ENCODE measurements at regions of chr13 and their contacts with region 1.

Region 1: GRCh38 chr13:90867336-90867683 is 480.2 kb upstream of the MIR17HG start:
- DNase-seq: peak; percentile 84 to 85
- H3K4me3 ChIP-seq: no peak overlapping the region
- H3K4me3 Mint-ChIP-seq: no peak overlapping the region
- H3K27ac Mint-ChIP-seq: peak overlapping the region; percentile 72
- H3K4me1 ChIP-seq: peaks cover 10% of the 10 kb centered on the region
- H3K4me1 Mint-ChIP-seq: peaks cover 13% of the 10 kb centered on the region
- H3K27me3 ChIP-seq: no peaks in the 10 kb centered on the region
- H3K27me3 Mint-ChIP-seq: no peaks in the 10 kb centered on the region
- CTCF ChIP-seq: peak; percentile 68 to 74

Region 2: GRCh38 chr13:89930861-89931260 is 936.4 kb before region 1 on chr13:
- CTCF ChIA-PET with region 1: no interaction called
- POLR2A ChIA-PET with region 1: no interaction called
- intact Hi-C with region 1: loop called (anchors 1 kb)
- DNase-seq: peak; percentile 25 to 43
- H3K4me3 ChIP-seq: no peak overlapping the region
- H3K4me3 Mint-ChIP-seq: peak overlapping the region; percentile 42
- H3K27ac Mint-ChIP-seq: no peak overlapping the region
- H3K4me1 ChIP-seq: peaks cover 11% of the 10 kb centered on the region; the same call in 1 of the 2 replicates
- H3K4me1 Mint-ChIP-seq: peaks cover 9% of the 10 kb centered on the region
- H3K27me3 ChIP-seq: no peaks in the 10 kb centered on the region
- H3K27me3 Mint-ChIP-seq: no peaks in the 10 kb centered on the region
- CTCF ChIP-seq: no peak

Region 3: GRCh38 chr13:90374168-90374567 is 493.1 kb before region 1 on chr13:
- CTCF ChIA-PET with region 1: no interaction called
- POLR2A ChIA-PET with region 1: no interaction called
- intact Hi-C with region 1: loop called (anchors 5 kb)
- DNase-seq: no peak
- H3K4me3 ChIP-seq: no peak overlapping the region
- H3K4me3 Mint-ChIP-seq: no peak overlapping the region
- H3K27ac Mint-ChIP-seq: no peak overlapping the region
- H3K4me1 ChIP-seq: no peaks in the 10 kb centered on the region
- H3K4me1 Mint-ChIP-seq: no peaks in the 10 kb centered on the region
- H3K27me3 ChIP-seq: no peaks in the 10 kb centered on the region; the same call in 1 of the 2 replicates
- H3K27me3 Mint-ChIP-seq: no peaks in the 10 kb centered on the region
- CTCF ChIP-seq: no peak

Region 4: GRCh38 chr13:90502153-90502552 is 365.2 kb before region 1 on chr13:
- CTCF ChIA-PET with region 1: interaction called, 4 read pairs
- POLR2A ChIA-PET with region 1: interaction called, 4 read pairs
- intact Hi-C with region 1: loop called (anchors 5 kb)
- DNase-seq: no peak
- H3K4me3 ChIP-seq: no peak overlapping the region
- H3K4me3 Mint-ChIP-seq: no peak overlapping the region
- H3K27ac Mint-ChIP-seq: peak overlapping the region; percentile 73
- H3K4me1 ChIP-seq: peaks cover 65% of the 10 kb centered on the region
- H3K4me1 Mint-ChIP-seq: peaks cover 50% of the 10 kb centered on the region
- H3K27me3 ChIP-seq: no peaks in the 10 kb centered on the region
- H3K27me3 Mint-ChIP-seq: no peaks in the 10 kb centered on the region
- CTCF ChIP-seq: no peak

Region 5: GRCh38 chr13:90717451-90717936 is 149.8 kb before region 1 on chr13:
- CTCF ChIA-PET with region 1: no interaction called
- POLR2A ChIA-PET with region 1: no interaction called
- intact Hi-C with region 1: loop called (anchors 5 kb)
- DNase-seq: no peak
- H3K4me3 ChIP-seq: no peak overlapping the region
- H3K4me3 Mint-ChIP-seq: no peak overlapping the region
- H3K27ac Mint-ChIP-seq: peak overlapping the region; percentile 40
- H3K4me1 ChIP-seq: peaks cover 12% of the 10 kb centered on the region; the same call in 1 of the 2 replicates
- H3K4me1 Mint-ChIP-seq: peaks cover 16% of the 10 kb centered on the region
- H3K27me3 ChIP-seq: no peaks in the 10 kb centered on the region
- H3K27me3 Mint-ChIP-seq: no peaks in the 10 kb centered on the region
- CTCF ChIP-seq: no peak

Region 6: GRCh38 chr13:90839061-90839460 is 28.2 kb before region 1 on chr13:
- CTCF ChIA-PET with region 1: interaction called, 6 read pairs
- POLR2A ChIA-PET with region 1: no interaction called
- intact Hi-C with region 1: loop called (anchors 1 kb)
- DNase-seq: peak; percentile 89 to 94
- H3K4me3 ChIP-seq: no peak overlapping the region
- H3K4me3 Mint-ChIP-seq: no peak overlapping the region
- H3K27ac Mint-ChIP-seq: no peak overlapping the region
- H3K4me1 ChIP-seq: peaks cover 36% of the 10 kb centered on the region
- H3K4me1 Mint-ChIP-seq: peaks cover 36% of the 10 kb centered on the region
- H3K27me3 ChIP-seq: no peaks in the 10 kb centered on the region
- H3K27me3 Mint-ChIP-seq: no peaks in the 10 kb centered on the region
- CTCF ChIP-seq: no peak

Region 7: DNA sequence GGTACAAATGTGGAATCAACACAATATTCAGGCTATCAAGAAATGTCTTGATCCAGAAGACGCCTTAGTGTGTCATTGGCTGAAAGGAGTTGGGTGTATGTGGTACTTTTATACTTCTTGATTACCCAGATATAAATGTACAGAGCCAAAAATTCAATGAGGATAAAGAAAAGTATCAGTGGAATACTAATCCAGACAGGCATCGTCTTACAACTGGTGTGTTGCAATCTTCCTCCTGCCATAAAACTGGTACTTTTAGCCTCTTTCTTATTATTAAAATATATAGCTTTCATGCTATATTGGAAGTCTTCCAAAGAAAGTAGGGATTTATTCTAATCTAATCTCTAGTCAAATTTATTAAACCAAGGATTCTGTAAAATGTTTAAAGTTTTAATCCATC is 91.6 kb after region 1 on chr13:
- CTCF ChIA-PET with region 1: no interaction called
- POLR2A ChIA-PET with region 1: no interaction called
- intact Hi-C with region 1: no loop called
- DNase-seq: no peak
- H3K4me3 ChIP-seq: no peak overlapping the region
- H3K4me3 Mint-ChIP-seq: no peak overlapping the region
- H3K27ac Mint-ChIP-seq: no peak overlapping the region
- H3K4me1 ChIP-seq: no peaks in the 10 kb centered on the region
- H3K4me1 Mint-ChIP-seq: no peaks in the 10 kb centered on the region
- H3K27me3 ChIP-seq: no peaks in the 10 kb centered on the region
- H3K27me3 Mint-ChIP-seq: peaks cover 5% of the 10 kb centered on the region
- CTCF ChIP-seq: no peak

Measured in Caco-2 (cell line).